ENCODE measurements at regions of chr10 and their contacts with region 1.

Region 1: GRCh38 chr10:5466418-5467154 is 32.8 kb downstream of the CALML5 start:
- DNase-seq: peak; percentile 86 to 87
- H3K4me3 ChIP-seq: peak overlapping the region; percentile 42; the same call in 1 of the 2 replicates
- H3K27ac ChIP-seq: peak overlapping the region; percentile 91
- H3K4me1 ChIP-seq: peaks cover 30% of the 10 kb centered on the region
- H3K27me3 ChIP-seq: no peaks in the 10 kb centered on the region
- CTCF ChIP-seq: no peak

Region 2: DNA sequence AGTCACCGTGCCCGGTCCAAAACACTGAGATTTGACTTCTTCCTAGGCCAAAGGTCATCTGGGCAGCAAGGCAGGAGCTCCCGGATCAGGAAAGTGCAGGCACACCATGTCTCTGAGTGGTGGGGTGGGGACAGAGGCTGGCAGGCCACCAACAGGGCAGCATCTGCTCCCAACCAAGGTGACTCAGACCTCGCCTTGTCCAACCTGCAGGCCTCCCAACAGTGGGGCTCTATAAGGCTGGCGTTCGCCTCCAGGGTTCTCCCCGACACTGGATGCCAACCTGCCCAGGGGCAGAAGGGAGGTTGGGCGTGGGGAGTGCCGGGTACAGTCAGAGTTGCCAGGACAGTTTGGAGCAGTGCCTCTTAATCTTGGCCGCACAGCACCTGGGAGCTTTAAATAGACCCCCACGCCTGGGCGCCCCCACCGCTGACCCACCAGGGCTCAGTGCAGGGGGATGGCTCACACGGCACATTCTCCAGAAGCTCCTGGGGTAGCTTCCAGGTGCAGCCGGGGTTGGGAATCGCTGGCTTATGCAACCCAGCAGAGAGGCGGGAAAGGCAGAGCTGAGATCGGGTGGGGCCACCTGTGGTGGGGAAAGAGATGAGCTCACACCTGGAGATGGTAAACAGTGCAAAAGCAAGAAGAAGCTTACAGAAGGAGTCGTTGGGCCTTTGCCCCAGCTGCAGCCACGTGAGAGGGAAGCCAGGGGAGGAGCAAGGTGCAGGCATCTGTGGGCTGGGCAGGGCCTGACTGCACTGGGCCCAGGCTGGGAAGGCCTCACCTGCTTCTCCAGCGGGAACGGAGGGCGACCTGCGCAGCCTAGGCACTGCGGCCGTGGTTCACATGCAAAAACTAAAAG is 22.0 kb after region 1 on chr10:
- CTCF ChIA-PET with region 1: no interaction called
- POLR2A ChIA-PET with region 1: no interaction called
- intact Hi-C with region 1: loop called (anchors 1 kb)
- DNase-seq: peak; percentile 94 to 97
- H3K4me3 ChIP-seq: peak overlapping the region; percentile 45; the same call in 1 of the 2 replicates
- H3K27ac ChIP-seq: peak overlapping the region; percentile 98
- H3K4me1 ChIP-seq: peaks cover 37% of the 10 kb centered on the region
- H3K27me3 ChIP-seq: no peaks in the 10 kb centered on the region
- CTCF ChIP-seq: 0 out of 2 replicates have a peak, but pooled peaks have one; percentile 16

Region 3: GRCh38 chr10:5496261-5497250 is 30.0 kb after region 1 on chr10:
- CTCF ChIA-PET with region 1: no interaction called
- POLR2A ChIA-PET with region 1: interaction called, 8 read pairs
- intact Hi-C with region 1: loop called (anchors 1 kb)
- DNase-seq: peak; percentile 80 to 93
- H3K4me3 ChIP-seq: no peak overlapping the region
- H3K27ac ChIP-seq: peak overlapping the region; percentile 66
- H3K4me1 ChIP-seq: peaks cover 79% of the 10 kb centered on the region
- H3K27me3 ChIP-seq: no peaks in the 10 kb centered on the region
- CTCF ChIP-seq: no peak

Region 4: DNA sequence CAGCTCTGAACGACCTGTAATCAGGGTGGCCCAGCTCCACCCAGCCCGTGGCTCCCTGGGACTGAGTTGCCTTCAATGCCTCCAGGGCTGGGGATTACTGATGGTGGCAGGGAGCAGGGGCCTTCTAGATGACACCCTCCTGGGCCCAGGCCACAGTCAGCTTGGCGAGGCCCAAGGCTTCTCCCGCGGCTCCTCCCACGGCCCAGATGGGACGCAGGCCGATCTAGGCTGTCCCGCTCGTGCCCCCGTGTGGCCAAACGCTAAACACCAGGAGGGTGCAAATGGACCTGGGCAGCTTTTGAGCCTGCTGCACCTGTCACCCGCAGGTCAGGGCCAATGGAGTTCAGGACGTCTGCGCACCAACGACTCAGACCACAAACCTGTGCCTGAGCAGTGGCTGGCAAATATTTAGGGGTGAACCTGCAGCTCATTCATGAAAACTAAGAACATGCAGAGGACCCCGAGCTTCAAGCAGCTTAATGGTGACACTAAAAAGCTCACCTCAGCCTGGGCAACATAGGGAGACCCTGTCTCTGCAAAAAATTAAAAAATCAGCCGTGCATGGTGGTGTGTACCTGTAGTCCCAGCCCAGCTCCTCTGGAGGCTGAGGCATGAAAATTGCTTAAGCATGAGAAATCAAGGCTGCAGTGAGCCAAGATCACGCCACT is 156.6 kb after region 1 on chr10:
- CTCF ChIA-PET with region 1: no interaction called
- POLR2A ChIA-PET with region 1: no interaction called
- intact Hi-C with region 1: loop called (anchors 2 kb)
- DNase-seq: peak; percentile 83 to 93
- H3K4me3 ChIP-seq: no peak overlapping the region
- H3K27ac ChIP-seq: peak overlapping the region; percentile 77
- H3K4me1 ChIP-seq: peaks cover 20% of the 10 kb centered on the region
- H3K27me3 ChIP-seq: no peaks in the 10 kb centered on the region
- CTCF ChIP-seq: peak; percentile 84

Region 5: DNA sequence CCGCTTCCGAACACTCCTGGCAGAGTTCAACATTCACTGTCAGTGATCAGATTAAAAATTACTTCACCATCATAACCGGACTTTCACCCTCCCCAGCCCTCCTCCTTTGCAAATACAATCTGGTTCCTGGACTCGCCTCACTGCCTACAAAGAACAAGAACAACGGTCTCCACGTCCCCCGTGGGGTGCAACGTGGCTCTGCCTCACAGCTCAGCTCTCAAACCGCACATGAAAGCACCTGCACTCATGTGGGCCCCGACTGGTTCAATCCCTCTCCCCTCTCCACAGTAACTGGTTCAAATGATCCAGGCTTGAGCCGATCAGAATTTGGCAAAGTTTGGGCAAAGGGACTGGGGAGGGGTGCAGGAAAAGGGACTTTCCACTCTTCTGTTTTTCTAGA is 178.8 kb after region 1 on chr10:
- CTCF ChIA-PET with region 1: no interaction called
- POLR2A ChIA-PET with region 1: no interaction called
- intact Hi-C with region 1: no loop called
- DNase-seq: no peak
- H3K4me3 ChIP-seq: no peak overlapping the region
- H3K27ac ChIP-seq: no peak overlapping the region
- H3K4me1 ChIP-seq: no peaks in the 10 kb centered on the region
- H3K27me3 ChIP-seq: no peaks in the 10 kb centered on the region
- CTCF ChIP-seq: no peak